Panc1 (cell line): ENCODE measurements at regions of chr2 and their contacts with region 1.

Region 1: DNA sequence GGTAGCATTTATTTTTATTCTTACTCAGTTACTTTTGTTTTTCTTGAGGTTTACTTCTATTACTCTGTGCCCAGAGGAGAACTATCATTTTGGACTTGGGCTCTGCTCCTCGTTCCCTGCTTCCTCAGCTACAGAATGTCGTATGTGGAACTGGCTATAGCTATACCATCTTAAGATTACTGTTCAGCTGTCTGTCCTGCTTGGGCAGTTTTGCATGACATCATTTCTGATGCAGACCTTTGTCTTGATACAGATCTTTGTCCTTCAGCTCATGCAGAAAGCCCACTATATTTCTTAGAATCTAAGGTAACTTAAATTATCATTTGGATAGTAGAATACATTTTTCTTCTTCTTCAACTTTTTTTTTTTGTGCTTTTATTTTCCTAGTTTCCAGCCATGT is 13.8 kb upstream of the C1GALT1C1L start:
- DNase-seq: no peak
- ATAC-seq: no peak
- H3K4me3 ChIP-seq: no peak overlapping the region
- H3K27ac ChIP-seq: no peak overlapping the region
- H3K4me1 ChIP-seq: no peaks in the 10 kb centered on the region
- H3K27me3 ChIP-seq: no peaks in the 10 kb centered on the region
- CTCF ChIP-seq: no peak

Region 2: GRCh38 chr2:43710866-43711265 is 20.9 kb after region 1 on chr2:
- CTCF ChIA-PET with region 1: interaction called, 11 read pairs
- POLR2A ChIA-PET with region 1: no interaction called
- in situ Hi-C with region 1: no loop called
- intact Hi-C with region 1: no loop called
- DNase-seq: no peak
- ATAC-seq: no peak
- H3K4me3 ChIP-seq: no peak overlapping the region
- H3K27ac ChIP-seq: no peak overlapping the region
- H3K4me1 ChIP-seq: no peaks in the 10 kb centered on the region
- H3K27me3 ChIP-seq: no peaks in the 10 kb centered on the region
- CTCF ChIP-seq: no peak

Region 3: GRCh38 chr2:43877782-43878464 is 187.9 kb after region 1 on chr2:
- CTCF ChIA-PET with region 1: no interaction called
- POLR2A ChIA-PET with region 1: no interaction called
- in situ Hi-C with region 1: no loop called
- intact Hi-C with region 1: no loop called
- DNase-seq: peak; percentile 55
- ATAC-seq: peak; percentile 87
- H3K4me3 ChIP-seq: no peak overlapping the region
- H3K27ac ChIP-seq: no peak overlapping the region
- H3K4me1 ChIP-seq: peaks cover 3% of the 10 kb centered on the region
- H3K27me3 ChIP-seq: no peaks in the 10 kb centered on the region
- CTCF ChIP-seq: peak; percentile 96